OCI-LY7 (cell line): ENCODE measurements at regions of chr3 and their contacts with region 1.

Region 1: GRCh38 chr3:9890249-9891071 is at the start of gene JAGN1:
- DNase-seq: peak; percentile 92
- H3K4me3 ChIP-seq: peak within 1 kb of the TSS; percentile 95
- H3K27ac ChIP-seq: peak within 1 kb of the TSS; percentile 60
- H3K4me1 ChIP-seq: peaks cover 11% of the 10 kb centered on the region
- CTCF ChIP-seq: peak; percentile 23; the same call in 1 of the 2 replicates
- total RNA-seq, gene JAGN1: 20.4 and 21.0 TPM in 2 replicates

Region 2: GRCh38 chr3:9878700-9879099 is 11.8 kb before region 1 on chr3:
- CTCF ChIA-PET with region 1: no interaction called
- POLR2A ChIA-PET with region 1: interaction called, 17 read pairs
- intact Hi-C with region 1: no loop called
- DNase-seq: no peak
- H3K4me3 ChIP-seq: no peak overlapping the region
- H3K27ac ChIP-seq: no peak overlapping the region
- H3K4me1 ChIP-seq: no peaks in the 10 kb centered on the region
- CTCF ChIP-seq: no peak

Region 3: DNA sequence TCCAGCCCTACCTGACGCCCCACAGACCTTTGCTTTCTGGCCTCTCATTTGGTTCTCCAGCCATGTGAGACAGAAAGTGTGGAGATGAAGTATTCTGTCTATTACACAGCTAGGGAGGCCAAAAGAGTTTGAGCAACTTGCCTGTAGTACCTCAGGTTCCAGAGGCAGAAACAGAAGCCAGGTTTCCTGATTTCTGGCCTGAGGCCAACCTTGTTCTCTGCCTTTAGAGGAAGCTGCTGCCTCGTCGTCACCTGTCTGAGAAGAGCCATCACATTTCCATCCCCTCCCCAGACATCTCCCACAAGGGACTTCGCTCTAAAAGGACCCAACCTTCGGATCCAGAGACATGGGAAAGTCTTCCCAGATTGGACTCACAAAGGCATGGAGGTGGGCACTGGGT is 16.0 kb after region 1 on chr3:
- CTCF ChIA-PET with region 1: no interaction called
- POLR2A ChIA-PET with region 1: interaction called, 13 read pairs
- intact Hi-C with region 1: no loop called
- DNase-seq: no peak
- H3K4me3 ChIP-seq: no peak overlapping the region
- H3K27ac ChIP-seq: no peak overlapping the region
- H3K4me1 ChIP-seq: peaks cover 7% of the 10 kb centered on the region
- CTCF ChIP-seq: no peak